CD4-positive, alpha-beta memory T cell (primary cell): ENCODE measurements at regions of chr2 and their contacts with region 1.

Region 1: DNA sequence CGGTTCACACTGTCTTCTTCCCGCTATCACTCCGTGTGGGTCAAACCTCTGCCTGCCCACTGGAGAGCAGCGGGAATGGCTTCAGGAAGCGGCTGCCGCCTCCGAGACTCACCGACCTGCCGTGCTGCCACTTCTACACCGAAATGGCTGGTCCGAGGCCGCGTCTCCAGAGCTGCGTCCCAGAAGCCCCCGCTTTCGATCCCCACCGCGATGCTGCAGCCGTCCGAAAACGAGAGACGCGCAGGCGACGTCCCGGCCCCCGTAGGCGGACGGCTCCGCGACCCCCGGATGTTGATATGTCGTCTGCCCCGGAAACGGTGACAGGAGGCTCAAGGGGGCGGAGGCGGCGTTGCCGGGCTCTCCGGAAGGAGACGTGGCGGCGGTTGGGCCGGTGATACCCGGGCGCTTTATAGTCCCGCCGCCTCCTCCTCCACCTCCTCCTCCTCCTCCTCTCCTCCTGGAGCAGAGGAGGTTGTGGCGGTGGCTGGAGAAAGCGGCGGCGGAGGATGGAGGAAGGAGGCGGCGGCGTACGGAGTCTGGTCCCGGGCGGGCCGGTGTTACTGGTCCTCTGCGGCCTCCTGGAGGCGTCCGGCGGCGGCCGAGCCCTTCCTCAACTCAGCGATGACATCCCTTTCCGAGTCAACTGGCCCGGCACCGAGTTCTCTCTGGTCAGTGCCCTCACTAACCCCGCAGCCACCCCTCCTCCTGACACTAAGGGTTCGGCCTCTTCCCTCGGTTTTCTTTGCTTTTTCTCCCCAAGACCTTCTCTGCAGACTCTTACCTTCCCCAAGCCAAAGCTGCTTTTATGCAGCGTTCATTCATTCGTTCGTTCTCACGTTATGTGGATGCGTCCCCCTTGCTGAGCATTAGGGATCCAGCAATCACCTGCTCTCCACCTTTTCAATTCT is at the starts of genes ASB3 and ERLEC1:
- DNase-seq: peak; percentile 85 to 90 (median 87)
- H3K4me3 ChIP-seq: peak within 1 kb of the TSS; percentile 80 to 96
- H3K4me3 Mint-ChIP-seq: peak within 1 kb of the TSS; percentile 91 to 100 (median 96)
- H3K27ac ChIP-seq: peak within 1 kb of the TSS; percentile 86
- H3K27ac Mint-ChIP-seq: peak within 1 kb of the TSS; percentile 90 to 99 (median 95)
- H3K4me1 ChIP-seq: peaks cover 49% of the 10 kb centered on the region
- H3K4me1 Mint-ChIP-seq: peaks cover 36 to 73% (median 52%) of the 10 kb centered on the region in 4 donors
- H3K27me3 ChIP-seq: no peaks in the 10 kb centered on the region
- H3K27me3 Mint-ChIP-seq: no peaks in the 10 kb centered on the region
- total RNA-seq, gene ASB3: 40.1 to 43.5 TPM
- total RNA-seq, gene ERLEC1: 32.4 to 33.6 TPM

Region 2: DNA sequence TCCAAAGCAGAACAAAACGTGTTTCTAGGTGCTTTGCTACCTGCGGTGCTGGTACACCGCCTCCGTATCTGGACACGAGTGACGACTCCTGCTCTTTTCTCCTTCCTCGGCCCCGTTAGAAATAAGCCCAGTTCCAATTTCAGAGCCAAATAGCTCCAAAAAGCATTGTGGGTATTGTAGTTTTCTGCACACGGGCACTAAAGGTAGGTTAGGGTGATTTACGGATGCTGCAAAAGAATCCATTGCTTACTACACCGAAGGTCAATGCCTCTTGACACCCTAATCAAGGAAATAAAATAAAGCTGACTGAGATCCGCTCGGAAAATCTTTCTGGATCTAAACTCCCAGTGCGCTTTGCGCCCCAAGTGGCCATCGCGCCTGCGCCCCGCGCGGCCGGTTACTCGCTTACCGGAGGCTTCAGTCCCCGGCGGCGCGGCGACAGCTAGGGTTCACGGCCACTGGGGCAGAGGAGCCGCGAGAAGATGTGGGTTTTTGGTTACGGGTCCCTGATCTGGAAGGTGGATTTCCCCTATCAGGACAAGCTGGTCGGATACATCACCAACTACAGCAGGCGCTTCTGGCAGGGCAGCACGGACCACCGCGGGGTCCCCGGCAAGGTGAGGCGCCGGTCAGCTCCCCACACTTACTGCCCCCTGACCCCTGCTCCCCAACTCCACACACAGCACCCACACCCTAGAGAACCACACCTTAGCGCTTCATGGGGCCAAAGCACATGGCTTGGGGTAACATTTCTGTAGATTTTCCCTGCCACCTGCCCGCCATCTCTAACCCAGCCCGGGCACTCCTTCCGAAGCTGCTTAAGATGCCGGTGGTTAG is 19.3 kb before region 1 on chr2 and contains the start of gene CHAC2:
- CTCF ChIA-PET with region 1: interaction called, 6 read pairs
- POLR2A ChIA-PET with region 1: interaction called, 66 read pairs
- intact Hi-C with region 1: loop called (anchors 1 kb)
- DNase-seq: peak; percentile 82 to 89 (median 86)
- H3K4me3 ChIP-seq: peak within 1 kb of the TSS; percentile 59 to 61
- H3K4me3 Mint-ChIP-seq: peak within 1 kb of the TSS; percentile 90 to 97 (median 94)
- H3K27ac ChIP-seq: peak within 1 kb of the TSS; percentile 82
- H3K27ac Mint-ChIP-seq: peak within 1 kb of the TSS; percentile 89 to 98 (median 96)
- H3K4me1 ChIP-seq: peaks cover 17% of the 10 kb centered on the region
- H3K4me1 Mint-ChIP-seq: peaks cover 11 to 31% (median 20%) of the 10 kb centered on the region in 4 donors
- H3K27me3 ChIP-seq: no peaks in the 10 kb centered on the region
- H3K27me3 Mint-ChIP-seq: no peaks in the 10 kb centered on the region
- total RNA-seq, gene CHAC2: 1.5 to 1.6 TPM